Mammary epithelial cell (primary cell): ENCODE measurements at regions of chr13 and their contacts with region 1.

Region 1: GRCh38 chr13:81017513-81018152 is 676.7 kb upstream of the SPRY2 start:
- DNase-seq: peak; percentile 12
- H3K4me3 ChIP-seq: no peak overlapping the region
- H3K27ac ChIP-seq: no peak overlapping the region
- H3K4me1 ChIP-seq: peaks cover 7% of the 10 kb centered on the region
- H3K27me3 ChIP-seq: no peaks in the 10 kb centered on the region
- CTCF ChIP-seq: peak; percentile 41 to 59

Region 2: GRCh38 chr13:80979035-80979641 is 38.5 kb before region 1 on chr13:
- CTCF ChIA-PET with region 1: interaction called, 14 read pairs
- dilution Hi-C with region 1: no loop called
- in situ Hi-C with region 1: no loop called
- intact Hi-C with region 1: loop called (anchors 1 kb)
- DNase-seq: peak; percentile 42
- H3K4me3 ChIP-seq: no peak overlapping the region
- H3K27ac ChIP-seq: no peak overlapping the region
- H3K4me1 ChIP-seq: no peaks in the 10 kb centered on the region
- H3K27me3 ChIP-seq: no peaks in the 10 kb centered on the region
- CTCF ChIP-seq: peak; percentile 86 to 91

Region 3: GRCh38 chr13:81133066-81133465 is 115.4 kb after region 1 on chr13:
- CTCF ChIA-PET with region 1: no interaction called
- dilution Hi-C with region 1: no loop called
- in situ Hi-C with region 1: no loop called
- intact Hi-C with region 1: no loop called
- DNase-seq: peak; percentile 70
- H3K4me3 ChIP-seq: no peak overlapping the region
- H3K27ac ChIP-seq: no peak overlapping the region
- H3K4me1 ChIP-seq: peaks cover 7% of the 10 kb centered on the region
- H3K27me3 ChIP-seq: no peaks in the 10 kb centered on the region
- CTCF ChIP-seq: no peak